PC-9 (cell line): ENCODE measurements at regions of chr13 and their contacts with region 1.

Region 1: GRCh38 chr13:110869805-110870706 is 44.8 kb downstream of the ANKRD10 start:
- DNase-seq: peak; percentile 96 to 99
- H3K4me3 ChIP-seq: peak overlapping the region; percentile 65
- H3K27ac ChIP-seq: peak overlapping the region; percentile 97
- H3K4me1 ChIP-seq: peaks cover 28% of the 10 kb centered on the region
- H3K27me3 ChIP-seq: no peaks in the 10 kb centered on the region
- CTCF ChIP-seq: no peak

Region 2: GRCh38 chr13:110593430-110594130 is 276.5 kb before region 1 on chr13:
- CTCF ChIA-PET with region 1: no interaction called
- POLR2A ChIA-PET with region 1: no interaction called
- intact Hi-C with region 1: no loop called
- DNase-seq: peak in 1 of 2 experiments; percentile 59
- H3K4me3 ChIP-seq: no peak overlapping the region
- H3K27ac ChIP-seq: no peak overlapping the region
- H3K4me1 ChIP-seq: peaks cover 33% of the 10 kb centered on the region
- H3K27me3 ChIP-seq: no peaks in the 10 kb centered on the region
- CTCF ChIP-seq: peak; percentile 78

Region 3: DNA sequence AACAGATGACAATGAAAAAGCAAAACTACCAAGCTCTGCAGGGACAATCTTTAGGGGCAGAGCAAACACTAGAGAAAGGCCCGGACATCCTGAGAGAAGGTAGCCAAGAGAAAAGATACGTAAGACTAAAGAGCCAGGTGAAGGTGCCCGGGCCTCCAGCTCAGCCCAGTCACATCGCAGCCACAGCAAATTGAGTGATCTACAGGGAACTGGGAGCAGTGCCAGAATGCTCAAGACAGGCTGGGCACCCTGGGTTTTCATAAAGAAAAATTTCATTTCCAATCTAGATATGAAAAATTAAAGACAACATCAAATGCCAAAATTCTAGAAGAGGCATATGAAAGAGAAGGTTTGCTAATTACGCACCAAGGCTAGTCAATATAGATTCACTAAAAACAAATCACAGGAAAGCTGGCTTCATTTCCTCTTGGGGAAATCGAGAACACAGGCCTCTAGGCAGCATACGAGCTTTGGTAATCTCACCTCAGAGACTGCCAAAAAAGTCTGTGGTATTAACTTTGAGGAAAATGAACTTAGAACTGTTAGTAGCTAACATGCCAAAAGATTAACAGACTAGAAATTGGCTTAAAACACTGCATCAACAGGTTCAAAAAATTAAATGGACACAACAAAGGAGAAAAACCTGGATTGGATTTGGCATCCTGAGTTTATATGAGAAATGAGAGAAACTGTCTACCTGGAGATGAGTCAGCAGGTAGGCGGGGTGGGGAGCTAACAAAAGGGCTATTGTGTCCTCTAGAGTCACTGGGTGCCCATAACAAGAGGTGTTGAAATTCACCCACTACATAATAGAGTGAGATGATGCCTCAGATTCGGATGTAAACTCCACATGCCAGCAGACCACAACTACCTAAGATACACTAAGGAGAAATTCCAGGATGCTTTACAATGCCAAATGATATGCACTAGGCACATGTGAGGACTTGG is 38.2 kb after region 1 on chr13:
- CTCF ChIA-PET with region 1: no interaction called
- POLR2A ChIA-PET with region 1: interaction called, 4 read pairs
- intact Hi-C with region 1: loop called (anchors 1 kb)
- DNase-seq: peak; percentile 82 to 100
- H3K4me3 ChIP-seq: no peak overlapping the region
- H3K27ac ChIP-seq: peak overlapping the region; percentile 91
- H3K4me1 ChIP-seq: peaks cover 51% of the 10 kb centered on the region
- H3K27me3 ChIP-seq: no peaks in the 10 kb centered on the region
- CTCF ChIP-seq: no peak; the same call in 1 of the 2 replicates